SK-N-SH (cell line): ENCODE measurements at regions of chr4 and their contacts with region 1.

Region 1: DNA sequence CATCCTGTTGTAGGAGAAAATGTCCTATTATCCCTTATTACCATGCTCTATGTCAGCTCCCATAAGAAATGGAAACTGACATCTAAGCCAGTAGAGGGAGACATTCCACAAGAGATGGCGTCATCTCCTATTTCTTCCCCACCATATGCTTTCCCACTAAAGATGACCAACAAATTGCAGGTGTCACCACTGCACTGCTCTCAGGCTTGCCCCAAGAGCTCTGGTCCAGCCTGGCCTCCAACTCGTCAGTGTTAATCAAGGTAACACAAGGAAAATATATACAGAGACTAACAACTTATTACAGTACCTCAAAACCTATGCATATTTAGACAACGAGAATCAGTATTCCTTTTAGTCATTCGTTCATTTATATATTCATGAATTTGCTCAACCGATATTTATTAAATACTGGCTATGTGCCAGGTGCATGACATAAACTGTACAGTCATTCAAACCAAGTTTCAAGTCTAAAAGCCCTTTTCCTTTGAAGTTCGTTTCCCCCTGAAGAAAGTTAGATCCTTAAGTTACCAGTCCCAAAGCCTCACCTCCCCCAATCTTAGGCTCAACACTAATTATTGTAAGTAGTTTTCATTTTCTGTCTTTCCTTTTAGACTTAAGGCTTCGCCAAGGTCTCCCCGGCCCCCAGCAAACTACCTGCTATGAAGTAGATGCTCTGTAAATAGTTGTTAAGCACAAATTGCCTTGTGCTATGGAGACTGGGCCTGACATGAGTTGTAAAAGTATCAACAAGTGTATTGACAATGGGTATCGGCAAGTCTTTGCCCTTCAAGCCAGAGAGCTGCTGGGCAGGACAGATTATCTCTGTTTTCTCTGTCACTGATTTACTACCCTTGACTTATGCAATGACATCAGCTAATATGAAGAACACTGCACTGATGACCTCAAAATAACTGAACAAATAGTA is 3.1 kb upstream of the FGB start:
- DNase-seq: peak; percentile 23
- H3K4me3 ChIP-seq: no peak overlapping the region
- H3K27ac ChIP-seq: no peak overlapping the region
- H3K4me1 ChIP-seq: no peaks in the 10 kb centered on the region
- H3K27me3 ChIP-seq: peaks cover 5% of the 10 kb centered on the region; the same call in 1 of the 2 replicates
- CTCF ChIP-seq: peak; percentile 74
- EP300 ChIP-seq: no peak
- RAD21 ChIP-seq: peak; percentile 76

Region 2: DNA sequence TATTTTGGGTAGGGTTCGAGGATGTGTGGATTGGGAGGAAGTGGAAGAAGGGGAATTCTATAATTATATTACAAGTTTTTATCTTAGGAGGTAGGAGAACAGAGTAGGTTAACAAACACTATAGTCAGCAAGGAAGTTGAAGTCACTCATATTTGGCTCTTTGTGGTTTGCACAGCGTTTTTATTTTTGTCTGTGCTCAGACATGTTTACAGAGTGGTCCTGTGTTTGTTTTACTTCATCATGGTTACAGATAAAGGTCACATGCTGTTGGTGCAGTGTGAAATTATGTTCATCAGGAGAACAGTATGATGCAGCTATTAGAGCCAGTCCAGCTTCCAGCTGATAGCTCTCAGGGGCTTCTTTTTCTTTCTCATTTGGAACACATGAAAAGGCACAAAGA is 471.0 kb before region 1 on chr4:
- CTCF ChIA-PET with region 1: no interaction called
- POLR2A ChIA-PET with region 1: no interaction called
- DNase-seq: no peak
- H3K4me3 ChIP-seq: no peak overlapping the region
- H3K27ac ChIP-seq: no peak overlapping the region
- H3K4me1 ChIP-seq: no peaks in the 10 kb centered on the region
- H3K27me3 ChIP-seq: no peaks in the 10 kb centered on the region; the same call in 1 of the 2 replicates
- CTCF ChIP-seq: no peak
- EP300 ChIP-seq: no peak
- RAD21 ChIP-seq: no peak

Region 3: GRCh38 chr4:154471526-154472331 is 88.0 kb before region 1 on chr4:
- CTCF ChIA-PET with region 1: no interaction called
- POLR2A ChIA-PET with region 1: no interaction called
- DNase-seq: no peak
- H3K4me3 ChIP-seq: no peak overlapping the region
- H3K27ac ChIP-seq: no peak overlapping the region
- H3K4me1 ChIP-seq: no peaks in the 10 kb centered on the region
- H3K27me3 ChIP-seq: peaks cover 3% of the 10 kb centered on the region; the same call in 1 of the 2 replicates
- CTCF ChIP-seq: no peak
- EP300 ChIP-seq: no peak
- RAD21 ChIP-seq: no peak

Region 4: GRCh38 chr4:154542271-154542879 is 17.4 kb before region 1 on chr4:
- CTCF ChIA-PET with region 1: interaction called, 11 read pairs
- POLR2A ChIA-PET with region 1: no interaction called
- DNase-seq: no peak
- H3K4me3 ChIP-seq: no peak overlapping the region
- H3K27ac ChIP-seq: no peak overlapping the region
- H3K4me1 ChIP-seq: no peaks in the 10 kb centered on the region
- H3K27me3 ChIP-seq: no peaks in the 10 kb centered on the region
- CTCF ChIP-seq: no peak
- EP300 ChIP-seq: no peak
- RAD21 ChIP-seq: no peak

Region 5: GRCh38 chr4:154574311-154574710 is 14.6 kb after region 1 on chr4:
- CTCF ChIA-PET with region 1: interaction called, 15 read pairs
- POLR2A ChIA-PET with region 1: no interaction called
- DNase-seq: no peak
- H3K4me3 ChIP-seq: no peak overlapping the region
- H3K27ac ChIP-seq: no peak overlapping the region
- H3K4me1 ChIP-seq: no peaks in the 10 kb centered on the region
- H3K27me3 ChIP-seq: no peaks in the 10 kb centered on the region; the same call in none of the 2 replicates
- CTCF ChIP-seq: no peak
- EP300 ChIP-seq: no peak
- RAD21 ChIP-seq: no peak

Region 6: DNA sequence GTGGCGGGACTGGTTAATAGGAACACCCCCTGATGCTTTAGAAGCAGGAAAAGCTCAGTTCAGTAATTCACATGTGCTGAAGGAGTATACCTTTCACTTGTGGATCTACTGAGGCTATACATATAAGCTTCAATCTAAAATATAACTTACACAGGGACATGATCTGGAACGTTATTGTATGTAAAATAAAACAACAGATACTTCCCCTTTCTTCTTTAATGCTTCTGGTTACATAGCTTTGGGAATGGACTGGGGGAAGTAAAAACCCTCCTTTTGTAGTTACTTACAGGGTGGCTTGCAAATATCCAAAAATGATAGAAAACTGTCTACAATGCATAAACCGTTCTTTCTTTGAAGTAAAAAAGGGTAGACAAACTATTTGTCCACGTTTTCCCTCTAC is 50.8 kb after region 1 on chr4:
- CTCF ChIA-PET with region 1: interaction called, 13 read pairs
- POLR2A ChIA-PET with region 1: no interaction called
- DNase-seq: no peak
- H3K4me3 ChIP-seq: no peak overlapping the region
- H3K27ac ChIP-seq: no peak overlapping the region
- H3K4me1 ChIP-seq: no peaks in the 10 kb centered on the region
- H3K27me3 ChIP-seq: 0 out of 2 replicates have a peak, but pooled peaks cover 5% of the 10 kb centered on the region
- CTCF ChIP-seq: no peak
- EP300 ChIP-seq: no peak
- RAD21 ChIP-seq: no peak

Region 7: DNA sequence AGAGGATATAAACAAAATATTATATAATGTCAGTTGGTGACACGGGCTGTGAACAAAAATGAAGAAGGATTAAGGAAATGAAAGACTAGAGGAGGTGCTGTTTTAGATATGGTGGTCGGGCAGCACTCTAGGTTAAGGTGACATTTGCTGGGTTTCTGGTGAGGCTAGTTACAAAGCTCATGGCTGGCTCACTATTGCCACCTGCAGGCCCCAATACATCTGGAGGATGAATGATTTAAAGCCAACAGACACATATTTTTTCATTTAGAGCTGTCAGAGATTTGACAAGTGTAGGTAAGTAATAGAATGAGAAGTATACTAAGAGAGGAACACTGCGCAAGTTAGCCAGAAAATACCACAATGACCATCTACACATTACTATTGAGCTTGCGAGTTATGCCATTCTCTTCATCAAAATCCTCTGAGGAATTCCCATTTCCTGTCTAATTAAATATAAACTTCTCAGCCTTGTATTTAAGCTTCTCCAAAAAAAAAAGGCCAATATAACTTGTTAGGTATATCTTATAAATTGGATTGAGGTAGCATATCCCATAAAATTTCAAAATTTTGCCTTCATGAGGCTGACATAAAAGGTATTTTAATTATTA is 59.1 kb after region 1 on chr4:
- CTCF ChIA-PET with region 1: interaction called, 51 read pairs
- POLR2A ChIA-PET with region 1: no interaction called
- DNase-seq: peak; percentile 39
- H3K4me3 ChIP-seq: peak overlapping the region in 1 of 2 experiments; percentile 30; a peak in 1 of 4 replicates
- H3K27ac ChIP-seq: no peak overlapping the region
- H3K4me1 ChIP-seq: no peaks in the 10 kb centered on the region
- H3K27me3 ChIP-seq: no peaks in the 10 kb centered on the region; the same call in 1 of the 2 replicates
- CTCF ChIP-seq: peak; percentile 74
- EP300 ChIP-seq: no peak
- RAD21 ChIP-seq: peak; percentile 60

Region 8: GRCh38 chr4:154626793-154627484 is 67.2 kb after region 1 on chr4:
- CTCF ChIA-PET with region 1: interaction called, 51 read pairs
- POLR2A ChIA-PET with region 1: no interaction called
- DNase-seq: peak; percentile 79
- H3K4me3 ChIP-seq: peak overlapping the region; percentile 3 to 43; a peak in 2 of 4 replicates
- H3K27ac ChIP-seq: no peak overlapping the region
- H3K4me1 ChIP-seq: no peaks in the 10 kb centered on the region; a peak in 1 of 4 replicates
- H3K27me3 ChIP-seq: peaks cover 19% of the 10 kb centered on the region; the same call in 1 of the 2 replicates
- CTCF ChIP-seq: peak; percentile 47
- EP300 ChIP-seq: no peak
- RAD21 ChIP-seq: no peak